ENCODE measurements at regions of chr6 and their contacts with region 1.

Region 1: DNA sequence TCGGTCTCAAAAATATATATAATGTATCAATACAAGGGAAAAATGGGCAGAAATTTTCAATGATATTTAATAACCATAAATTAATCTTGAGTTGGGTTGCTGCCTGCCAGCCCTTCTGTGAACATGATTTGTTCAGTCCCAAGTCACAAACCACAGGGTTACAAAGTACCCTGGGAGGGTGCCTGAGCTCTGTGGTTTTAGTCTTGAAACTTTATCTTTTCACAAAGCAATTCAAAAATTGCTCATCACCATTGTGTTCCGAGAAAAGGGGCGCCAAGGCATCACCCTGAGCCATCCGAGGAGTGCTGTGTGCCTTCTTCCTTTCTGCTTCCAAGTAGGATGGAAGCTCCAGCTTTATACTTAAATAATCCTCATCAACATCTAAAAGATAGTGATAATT is 141.6 kb upstream of the AKAP12 start:
- DNase-seq: no peak
- H3K27ac ChIP-seq: no peak overlapping the region
- CTCF ChIP-seq: no peak

Region 2: GRCh38 chr6:151254451-151255081 is 156.4 kb after region 1 on chr6:
- CTCF ChIA-PET with region 1: interaction called, 10 read pairs
- POLR2A ChIA-PET with region 1: no interaction called
- DNase-seq: no peak
- H3K27ac ChIP-seq: no peak overlapping the region
- CTCF ChIP-seq: no peak

Measured in RWPE1 (cell line).